PC-9 (cell line): ENCODE measurements at regions of chr17 and their contacts with region 1.

Region 1: GRCh38 chr17:78186692-78187595 is at the starts of genes AFMID and TK1:
- DNase-seq: peak; percentile 90 to 99
- H3K4me3 ChIP-seq: peak within 1 kb of the TSS; percentile 69
- H3K27ac ChIP-seq: no peak within 1 kb of the TSS; the same call in 1 of the 2 replicates
- H3K4me1 ChIP-seq: peaks cover 8% of the 10 kb centered on the region
- H3K27me3 ChIP-seq: no peaks in the 10 kb centered on the region
- CTCF ChIP-seq: peak; percentile 83
- total RNA-seq, gene AFMID: 30.4 and 43.6 TPM in 2 replicates
- total RNA-seq, gene TK1: 137 and 147 TPM in 2 replicates

Region 2: GRCh38 chr17:77404812-77405581 is 781.9 kb before region 1 on chr17:
- CTCF ChIA-PET with region 1: interaction called, 10 read pairs
- POLR2A ChIA-PET with region 1: no interaction called
- intact Hi-C with region 1: no loop called
- DNase-seq: no peak
- H3K4me3 ChIP-seq: no peak overlapping the region
- H3K27ac ChIP-seq: no peak overlapping the region
- H3K4me1 ChIP-seq: no peaks in the 10 kb centered on the region
- H3K27me3 ChIP-seq: no peaks in the 10 kb centered on the region
- CTCF ChIP-seq: no peak

Region 3: DNA sequence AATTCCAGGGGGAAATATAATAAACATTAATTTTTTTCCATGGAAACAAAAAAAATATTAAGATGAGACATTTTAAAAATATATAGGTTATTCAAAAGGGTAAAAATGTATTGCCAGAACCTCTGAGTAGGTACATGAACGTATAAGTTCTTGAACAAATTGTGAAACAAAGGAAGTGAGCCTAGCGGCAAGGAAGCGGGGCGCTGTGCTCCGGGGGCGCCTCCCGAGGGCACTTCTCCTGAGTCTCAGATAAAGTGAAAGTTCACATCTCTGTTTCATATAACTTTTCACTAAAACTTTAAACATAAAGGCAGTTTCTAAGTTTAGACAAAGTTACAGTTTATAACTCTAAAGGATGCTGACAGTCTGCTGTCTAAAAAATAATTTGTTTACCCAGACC is 176.2 kb before region 1 on chr17:
- CTCF ChIA-PET with region 1: no interaction called
- POLR2A ChIA-PET with region 1: no interaction called
- intact Hi-C with region 1: no loop called
- DNase-seq: no peak
- H3K4me3 ChIP-seq: no peak overlapping the region
- H3K27ac ChIP-seq: no peak overlapping the region
- H3K4me1 ChIP-seq: no peaks in the 10 kb centered on the region
- H3K27me3 ChIP-seq: peaks cover 50% of the 10 kb centered on the region
- CTCF ChIP-seq: no peak

Region 4: GRCh38 chr17:78128551-78129350 is 58.2 kb before region 1 on chr17 and contains the start of gene TMC6:
- CTCF ChIA-PET with region 1: no interaction called
- POLR2A ChIA-PET with region 1: interaction called, 8 read pairs
- intact Hi-C with region 1: loop called (anchors 2 kb)
- DNase-seq: peak; percentile 83 to 92
- H3K4me3 ChIP-seq: peak within 1 kb of the TSS; percentile 81
- H3K27ac ChIP-seq: peak within 1 kb of the TSS; percentile 69
- H3K4me1 ChIP-seq: peaks cover 19% of the 10 kb centered on the region
- H3K27me3 ChIP-seq: no peaks in the 10 kb centered on the region
- CTCF ChIP-seq: no peak
- total RNA-seq, gene TMC6: 97.7 and 116 TPM in 2 replicates

Region 5: DNA sequence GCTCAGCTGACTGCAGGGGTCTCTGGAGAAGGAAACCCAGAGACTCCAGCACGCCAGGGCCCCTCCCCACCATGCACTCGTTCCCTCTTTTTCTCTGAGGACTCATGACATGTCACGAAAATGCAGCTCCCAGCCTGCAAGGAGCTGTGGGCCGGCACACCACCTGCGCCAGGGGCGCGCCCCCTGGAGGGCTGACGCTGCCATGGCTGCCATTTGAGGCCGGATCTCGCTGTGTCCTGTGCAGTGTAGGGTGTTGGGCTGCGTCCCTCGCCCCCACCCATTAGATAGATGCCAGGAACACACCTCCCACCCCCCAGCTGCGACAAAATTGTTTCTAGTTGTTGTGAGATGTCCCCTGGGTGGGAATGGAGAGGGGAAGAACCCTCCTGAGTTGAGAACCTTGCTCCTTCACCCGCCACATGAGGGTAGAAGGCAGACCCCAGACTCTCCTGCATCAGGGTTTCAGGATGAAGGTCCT is 10.4 kb before region 1 on chr17:
- CTCF ChIA-PET with region 1: interaction called, 15 read pairs
- POLR2A ChIA-PET with region 1: interaction called, 13 read pairs
- intact Hi-C with region 1: no loop called
- DNase-seq: no peak
- H3K4me3 ChIP-seq: no peak overlapping the region
- H3K27ac ChIP-seq: no peak overlapping the region
- H3K4me1 ChIP-seq: 0 out of 2 replicates have a peak, but pooled peaks cover 4% of the 10 kb centered on the region
- H3K27me3 ChIP-seq: no peaks in the 10 kb centered on the region
- CTCF ChIP-seq: peak; percentile 50

Region 6: DNA sequence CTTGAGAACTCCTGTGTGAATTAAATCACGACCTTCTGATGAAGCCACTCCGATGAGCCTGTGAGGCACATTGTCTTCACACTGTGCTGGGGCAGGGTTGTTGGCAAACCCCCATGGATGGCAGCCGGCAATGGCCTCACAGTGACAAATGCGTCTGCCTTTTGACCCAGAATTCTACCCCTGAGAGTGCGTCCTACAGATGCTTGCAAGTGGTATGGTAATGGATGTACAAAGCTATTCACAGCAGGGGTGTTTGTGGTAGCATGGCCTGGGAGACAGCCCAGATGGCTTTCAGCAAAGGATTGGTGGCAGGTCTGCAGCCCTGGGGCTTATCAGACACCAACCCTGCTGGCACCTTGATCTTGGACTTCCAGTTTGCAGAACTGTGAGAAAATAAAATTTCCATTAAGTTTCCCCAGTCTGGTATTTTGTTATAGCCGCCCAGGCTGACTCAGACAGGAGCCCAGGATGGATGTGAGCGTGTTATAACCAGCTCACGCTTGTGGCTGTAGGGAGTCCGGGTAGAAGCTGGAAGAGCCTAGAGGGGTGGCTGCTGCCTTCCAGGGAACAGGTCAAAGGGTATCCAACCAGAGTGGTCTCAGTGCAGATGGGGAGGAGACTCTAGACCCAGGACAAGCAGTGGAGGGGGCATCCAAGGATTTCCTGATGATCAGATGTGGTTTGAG is 10.3 kb after region 1 on chr17:
- CTCF ChIA-PET with region 1: interaction called, 16 read pairs
- POLR2A ChIA-PET with region 1: interaction called, 17 read pairs
- intact Hi-C with region 1: no loop called
- DNase-seq: no peak
- H3K4me3 ChIP-seq: no peak overlapping the region
- H3K27ac ChIP-seq: no peak overlapping the region
- H3K4me1 ChIP-seq: no peaks in the 10 kb centered on the region; the same call in 1 of the 2 replicates
- H3K27me3 ChIP-seq: no peaks in the 10 kb centered on the region
- CTCF ChIP-seq: no peak

Region 7: GRCh38 chr17:78272181-78272913 is 85.4 kb after region 1 on chr17:
- CTCF ChIA-PET with region 1: no interaction called
- POLR2A ChIA-PET with region 1: no interaction called
- intact Hi-C with region 1: no loop called
- DNase-seq: peak; percentile 36 to 58
- H3K4me3 ChIP-seq: peak overlapping the region; percentile 14; the same call in 1 of the 2 replicates
- H3K27ac ChIP-seq: no peak overlapping the region
- H3K4me1 ChIP-seq: no peaks in the 10 kb centered on the region
- H3K27me3 ChIP-seq: peaks cover 8% of the 10 kb centered on the region
- CTCF ChIP-seq: no peak

Region 8: GRCh38 chr17:78313735-78314648 is 127.0 kb after region 1 on chr17:
- CTCF ChIA-PET with region 1: no interaction called
- POLR2A ChIA-PET with region 1: no interaction called
- intact Hi-C with region 1: no loop called
- DNase-seq: peak; percentile 75 to 98
- H3K4me3 ChIP-seq: peak overlapping the region; percentile 51; the same call in 1 of the 2 replicates
- H3K27ac ChIP-seq: peak overlapping the region; percentile 95
- H3K4me1 ChIP-seq: peaks cover 41% of the 10 kb centered on the region
- H3K27me3 ChIP-seq: no peaks in the 10 kb centered on the region
- CTCF ChIP-seq: no peak